ENCODE measurements at regions of chr7 and their contacts with region 1.

Region 1: GRCh38 chr7:97499204-97499603 is 232.7 kb upstream of the TAC1 start:
- DNase-seq: peak; percentile 27 to 54
- H3K4me3 ChIP-seq: no peak overlapping the region
- H3K27ac ChIP-seq: no peak overlapping the region
- H3K4me1 ChIP-seq: no peaks in the 10 kb centered on the region
- H3K27me3 ChIP-seq: no peaks in the 10 kb centered on the region
- CTCF ChIP-seq: peak; percentile 46 to 67 (median 61)
- EP300 ChIP-seq: no peak
- POLR2A ChIP-seq: no peak
- RAD21 ChIP-seq: peak; percentile 74 to 81

Region 2: GRCh38 chr7:97466071-97466470 is 33.1 kb before region 1 on chr7:
- CTCF ChIA-PET with region 1: no interaction called
- POLR2A ChIA-PET with region 1: no interaction called
- DNase-seq: no peak
- H3K4me3 ChIP-seq: no peak overlapping the region
- H3K27ac ChIP-seq: no peak overlapping the region
- H3K4me1 ChIP-seq: no peaks in the 10 kb centered on the region
- H3K27me3 ChIP-seq: no peaks in the 10 kb centered on the region
- CTCF ChIP-seq: no peak
- EP300 ChIP-seq: no peak
- POLR2A ChIP-seq: no peak
- RAD21 ChIP-seq: no peak

Region 3: GRCh38 chr7:97819161-97819560 is 320.0 kb after region 1 on chr7:
- CTCF ChIA-PET with region 1: interaction called, 18 read pairs
- POLR2A ChIA-PET with region 1: no interaction called
- DNase-seq: no peak
- H3K4me3 ChIP-seq: no peak overlapping the region
- H3K27ac ChIP-seq: no peak overlapping the region
- H3K4me1 ChIP-seq: no peaks in the 10 kb centered on the region
- H3K27me3 ChIP-seq: no peaks in the 10 kb centered on the region
- CTCF ChIP-seq: peak in 2 of 3 experiments; percentile 25 to 39; a peak in 2 of 4 replicates
- EP300 ChIP-seq: no peak
- POLR2A ChIP-seq: no peak
- RAD21 ChIP-seq: peak; percentile 68 to 71

Measured in H1 (cell line).